ENCODE measurements at regions of chr5 and their contacts with region 1.

Region 1: GRCh38 chr5:67156976-67157583 is 39.5 kb downstream of the CD180 start:
- DNase-seq: peak; percentile 69
- ATAC-seq: peak; percentile 69
- H3K4me3 ChIP-seq: no peak overlapping the region
- H3K4me3 Mint-ChIP-seq: no peak overlapping the region
- H3K27ac ChIP-seq: no peak overlapping the region
- H3K27ac Mint-ChIP-seq: peak overlapping the region; percentile 46
- H3K4me1 ChIP-seq: peaks cover 3 to 6% of the 10 kb centered on the region in 2 donors
- H3K4me1 Mint-ChIP-seq: peaks cover 17% of the 10 kb centered on the region
- H3K27me3 ChIP-seq: no peaks in the 10 kb centered on the region
- H3K27me3 Mint-ChIP-seq: no peaks in the 10 kb centered on the region
- CTCF ChIP-seq: peak; percentile 95

Region 2: DNA sequence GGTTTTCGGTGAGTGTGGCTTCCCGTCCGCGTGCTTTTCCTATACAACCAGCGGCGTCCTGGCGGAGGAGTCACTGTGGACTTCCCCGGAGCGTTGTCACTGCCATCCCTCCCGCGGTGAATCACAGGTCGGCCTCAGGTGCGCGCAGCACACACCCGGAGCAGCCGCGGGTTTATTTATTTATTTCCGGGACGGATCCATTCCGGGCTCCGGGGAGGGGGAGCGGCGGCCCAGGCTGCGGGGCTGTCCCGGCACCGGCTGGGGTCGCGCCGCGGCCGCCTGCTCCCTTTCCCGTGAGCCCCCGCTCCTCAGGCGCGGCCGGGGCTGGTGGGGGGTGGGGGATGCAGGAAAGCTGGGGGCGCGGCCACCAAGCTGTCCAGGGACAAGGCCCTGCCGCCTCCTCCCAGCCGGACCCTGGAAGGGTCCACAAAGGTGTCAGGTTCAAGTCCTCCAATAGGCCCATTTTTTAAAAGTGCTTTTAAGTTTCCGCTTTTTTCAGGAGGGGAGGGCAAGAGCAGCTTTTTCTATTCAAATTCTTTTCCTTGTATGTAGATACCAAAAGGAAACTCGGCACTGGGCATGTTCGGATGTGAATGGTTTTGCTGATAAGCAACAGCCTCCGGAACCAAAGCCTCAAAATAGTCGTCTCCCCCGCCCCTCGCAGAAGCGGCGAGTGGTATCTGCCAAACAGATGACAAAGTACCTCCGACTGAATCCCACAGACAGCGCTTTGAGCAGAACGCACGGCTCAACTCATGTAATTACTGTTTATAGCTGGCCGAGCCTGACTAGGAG is 152.9 kb before region 1 on chr5:
- CTCF ChIA-PET with region 1: no interaction called
- POLR2A ChIA-PET with region 1: no interaction called
- intact Hi-C with region 1: loop called (anchors 10 kb)
- DNase-seq: peak; percentile 87
- ATAC-seq: peak; percentile 81
- H3K4me3 ChIP-seq: peak overlapping the region; percentile 44 to 91 (median 74)
- H3K4me3 Mint-ChIP-seq: peak overlapping the region; percentile 96
- H3K27ac ChIP-seq: peak overlapping the region in 1 of 2 donors; percentile 67
- H3K27ac Mint-ChIP-seq: peak overlapping the region; percentile 93
- H3K4me1 ChIP-seq: peaks cover 13 to 27% of the 10 kb centered on the region in 2 donors
- H3K4me1 Mint-ChIP-seq: peaks cover 35% of the 10 kb centered on the region
- H3K27me3 ChIP-seq: peaks cover 0 to 6% (median 2%) of the 10 kb centered on the region in 4 experiments
- H3K27me3 Mint-ChIP-seq: no peaks in the 10 kb centered on the region
- CTCF ChIP-seq: no peak

Region 3: DNA sequence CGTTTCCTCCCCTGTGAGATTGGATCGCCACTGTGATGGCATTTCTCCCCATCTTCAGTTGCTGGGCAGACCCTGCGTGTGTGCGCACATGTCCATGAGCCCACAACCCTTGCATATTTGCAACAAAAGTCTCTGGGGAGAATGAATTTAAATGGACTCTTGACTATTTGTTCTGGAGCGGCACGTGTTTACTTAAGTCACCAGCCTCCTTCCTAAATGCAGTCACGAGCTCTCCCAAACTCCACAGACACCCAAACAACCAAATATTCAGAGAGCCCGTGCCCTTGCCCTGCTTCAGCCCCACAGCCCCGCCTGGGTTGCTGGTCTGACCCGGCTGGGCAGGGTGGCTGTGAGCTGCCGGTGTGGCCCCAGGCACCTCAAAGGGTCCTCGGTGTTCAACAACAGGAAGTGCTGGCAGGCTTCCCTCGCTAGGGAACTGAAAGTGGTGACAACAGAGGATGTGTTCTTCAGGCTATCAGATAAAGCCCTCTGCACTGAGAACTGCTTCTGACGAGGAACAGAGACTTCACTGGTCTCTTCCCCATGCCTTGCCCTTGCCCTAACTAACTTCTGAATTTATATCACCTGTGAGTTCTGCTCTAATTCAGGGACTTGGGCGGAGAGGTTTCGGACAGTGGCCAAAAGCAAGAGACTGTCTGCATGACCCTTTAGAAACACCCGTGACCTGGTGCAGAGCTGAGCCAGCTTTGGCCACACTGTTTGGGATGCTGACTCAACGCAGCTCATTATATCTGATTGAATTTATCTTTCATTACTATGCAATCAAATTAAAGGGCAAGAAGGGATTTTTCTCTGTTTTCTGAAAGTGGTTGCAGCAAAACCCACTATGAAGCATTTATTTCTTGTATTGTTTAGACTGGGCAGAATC is 58.7 kb after region 1 on chr5:
- CTCF ChIA-PET with region 1: interaction called, 582 read pairs
- POLR2A ChIA-PET with region 1: interaction called, 8 read pairs
- intact Hi-C with region 1: no loop called
- DNase-seq: peak; percentile 95
- ATAC-seq: peak; percentile 97
- H3K4me3 ChIP-seq: peak overlapping the region in 3 of 5 experiments; percentile 17 to 28 (median 20)
- H3K4me3 Mint-ChIP-seq: peak overlapping the region; percentile 85
- H3K27ac ChIP-seq: peak overlapping the region; percentile 92 to 98
- H3K27ac Mint-ChIP-seq: peak overlapping the region; percentile 100
- H3K4me1 ChIP-seq: peaks cover 34 to 39% of the 10 kb centered on the region in 2 donors
- H3K4me1 Mint-ChIP-seq: peaks cover 56% of the 10 kb centered on the region
- H3K27me3 ChIP-seq: no peaks in the 10 kb centered on the region
- H3K27me3 Mint-ChIP-seq: no peaks in the 10 kb centered on the region
- CTCF ChIP-seq: no peak

Region 4: DNA sequence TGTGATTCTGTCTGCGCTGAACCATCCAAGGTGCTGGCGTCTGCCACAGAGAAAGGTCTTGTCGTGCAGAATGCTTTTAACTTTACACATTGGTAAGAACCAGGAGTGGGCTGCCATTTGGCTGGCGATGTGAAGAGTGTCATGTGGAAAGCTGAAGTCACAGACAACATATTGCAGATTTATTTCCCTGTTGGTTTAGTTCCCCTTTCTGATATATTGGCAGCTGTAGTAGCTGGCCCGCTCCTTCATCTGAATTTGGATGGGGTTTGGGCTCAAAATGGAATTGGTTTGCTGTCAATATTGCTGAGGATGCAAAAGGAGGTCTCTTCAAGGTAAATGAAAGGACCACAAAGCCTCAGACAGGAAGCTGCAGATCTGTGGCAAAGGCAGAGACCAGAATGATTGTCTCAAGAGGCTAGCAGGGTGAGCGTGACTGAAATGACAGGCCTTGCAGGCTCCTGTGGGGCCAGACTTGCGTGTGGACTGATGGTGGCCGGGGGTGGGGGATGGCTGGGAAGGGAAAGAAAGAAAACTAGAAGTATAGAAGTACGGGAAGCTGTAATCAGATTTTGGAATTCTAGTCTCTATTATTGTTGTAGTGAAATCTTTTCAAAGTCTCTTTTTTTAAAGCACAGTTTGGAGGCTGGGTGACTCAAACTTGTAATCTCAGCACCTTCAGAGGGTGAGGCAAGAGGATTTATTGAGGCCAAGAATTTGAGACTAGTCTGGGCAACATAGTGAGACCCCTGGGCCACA is 64.6 kb after region 1 on chr5:
- CTCF ChIA-PET with region 1: interaction called, 10 read pairs
- POLR2A ChIA-PET with region 1: no interaction called
- intact Hi-C with region 1: no loop called
- DNase-seq: peak; percentile 71
- ATAC-seq: peak; percentile 70
- H3K4me3 ChIP-seq: peak overlapping the region in 4 of 5 experiments; percentile 23 to 59 (median 42)
- H3K4me3 Mint-ChIP-seq: peak overlapping the region; percentile 87
- H3K27ac ChIP-seq: peak overlapping the region; percentile 61 to 71
- H3K27ac Mint-ChIP-seq: peak overlapping the region; percentile 97
- H3K4me1 ChIP-seq: peaks cover 41 to 48% of the 10 kb centered on the region in 2 donors
- H3K4me1 Mint-ChIP-seq: peaks cover 53% of the 10 kb centered on the region
- H3K27me3 ChIP-seq: no peaks in the 10 kb centered on the region
- H3K27me3 Mint-ChIP-seq: no peaks in the 10 kb centered on the region
- CTCF ChIP-seq: no peak